IMR-90 (cell line): ENCODE measurements at regions of chr1 and their contacts with region 1.

Region 1: GRCh38 chr1:8463144-8463927 is 145.4 kb downstream of the SLC45A1 start:
- DNase-seq: peak; percentile 89
- ATAC-seq: peak; percentile 70
- H3K4me3 ChIP-seq: no peak overlapping the region
- H3K27ac ChIP-seq: peak overlapping the region; percentile 96
- H3K4me1 ChIP-seq: peaks cover 37% of the 10 kb centered on the region
- H3K27me3 ChIP-seq: no peaks in the 10 kb centered on the region
- CTCF ChIP-seq: no peak
- POLR2A ChIP-seq: no peak
- RAD21 ChIP-seq: no peak

Region 2: DNA sequence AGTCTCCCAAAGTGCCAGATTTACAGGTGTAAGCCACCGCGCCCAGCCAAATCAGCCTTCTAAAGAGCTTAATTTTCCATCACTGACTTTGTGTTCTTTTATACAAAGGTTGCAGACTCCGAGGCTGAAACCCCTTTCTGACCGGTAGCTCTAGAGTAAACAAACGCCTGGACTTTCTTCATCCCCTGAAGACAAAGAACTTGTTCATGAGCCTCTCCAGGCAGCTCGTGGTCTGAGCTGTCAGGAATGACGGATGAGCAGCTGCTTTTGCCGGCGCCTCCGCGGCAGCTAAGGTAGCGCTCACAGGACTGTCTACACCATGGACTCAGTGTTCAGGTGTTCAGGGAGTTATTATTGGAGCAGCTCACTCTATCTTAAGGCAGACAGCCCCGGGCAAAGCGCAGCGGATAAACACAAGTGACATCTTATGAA is 308.7 kb before region 1 on chr1:
- CTCF ChIA-PET with region 1: no interaction called
- POLR2A ChIA-PET with region 1: no interaction called
- dilution Hi-C with region 1: no loop called
- in situ Hi-C with region 1: no loop called
- intact Hi-C with region 1: no loop called
- DNase-seq: peak; percentile 74
- ATAC-seq: peak; percentile 71
- H3K4me3 ChIP-seq: no peak overlapping the region
- H3K27ac ChIP-seq: 0 out of 2 replicates have a peak overlapping the region, but pooled peaks have one; percentile 6
- H3K4me1 ChIP-seq: peaks cover 3% of the 10 kb centered on the region
- H3K27me3 ChIP-seq: no peaks in the 10 kb centered on the region
- CTCF ChIP-seq: no peak
- POLR2A ChIP-seq: no peak
- RAD21 ChIP-seq: no peak

Region 3: DNA sequence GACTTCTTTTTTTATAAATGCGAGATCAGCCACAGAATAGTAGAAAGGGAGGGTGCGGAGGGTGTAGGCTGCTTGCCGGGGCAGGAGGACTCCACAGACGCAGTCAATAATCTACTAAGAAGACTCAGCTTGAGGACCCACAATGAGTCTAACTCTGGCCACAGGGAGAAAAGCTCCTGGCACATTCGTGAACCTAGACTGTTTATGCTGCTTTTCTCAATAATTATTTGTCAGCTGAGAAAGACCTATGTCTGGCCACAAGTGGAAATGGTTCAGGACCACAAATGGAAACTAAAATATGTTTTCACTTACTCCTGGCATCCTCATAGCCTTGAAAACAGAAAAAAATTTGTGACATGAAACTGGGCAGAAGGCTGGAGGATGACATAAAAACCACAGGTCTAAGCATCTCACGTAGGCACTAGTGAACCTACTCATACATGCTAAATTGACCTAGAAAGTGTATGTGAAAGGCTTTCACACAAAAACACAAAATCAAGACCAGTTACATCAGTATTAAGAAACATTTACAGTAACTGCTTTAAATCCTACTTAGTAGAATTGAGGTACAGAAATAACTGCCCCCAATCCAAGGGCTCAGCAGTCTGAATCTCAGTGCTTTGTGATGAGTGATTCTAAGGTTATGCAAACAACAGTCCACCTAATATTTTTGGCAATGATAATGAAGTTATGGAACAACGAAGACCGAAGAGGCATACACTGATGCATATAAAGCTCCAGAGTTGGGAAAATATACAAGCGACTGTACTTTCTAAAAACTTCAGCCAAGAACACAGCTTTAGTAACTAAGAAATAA is 14.0 kb after region 1 on chr1:
- CTCF ChIA-PET with region 1: interaction called, 4 read pairs
- POLR2A ChIA-PET with region 1: interaction called, 14 read pairs
- dilution Hi-C with region 1: no loop called
- in situ Hi-C with region 1: no loop called
- intact Hi-C with region 1: no loop called
- DNase-seq: peak; percentile 76
- ATAC-seq: peak; percentile 64
- H3K4me3 ChIP-seq: no peak overlapping the region
- H3K27ac ChIP-seq: peak overlapping the region; percentile 86; the same call in 1 of the 2 replicates
- H3K4me1 ChIP-seq: peaks cover 17% of the 10 kb centered on the region
- H3K27me3 ChIP-seq: no peaks in the 10 kb centered on the region
- CTCF ChIP-seq: no peak
- POLR2A ChIP-seq: no peak
- RAD21 ChIP-seq: no peak

Region 4: DNA sequence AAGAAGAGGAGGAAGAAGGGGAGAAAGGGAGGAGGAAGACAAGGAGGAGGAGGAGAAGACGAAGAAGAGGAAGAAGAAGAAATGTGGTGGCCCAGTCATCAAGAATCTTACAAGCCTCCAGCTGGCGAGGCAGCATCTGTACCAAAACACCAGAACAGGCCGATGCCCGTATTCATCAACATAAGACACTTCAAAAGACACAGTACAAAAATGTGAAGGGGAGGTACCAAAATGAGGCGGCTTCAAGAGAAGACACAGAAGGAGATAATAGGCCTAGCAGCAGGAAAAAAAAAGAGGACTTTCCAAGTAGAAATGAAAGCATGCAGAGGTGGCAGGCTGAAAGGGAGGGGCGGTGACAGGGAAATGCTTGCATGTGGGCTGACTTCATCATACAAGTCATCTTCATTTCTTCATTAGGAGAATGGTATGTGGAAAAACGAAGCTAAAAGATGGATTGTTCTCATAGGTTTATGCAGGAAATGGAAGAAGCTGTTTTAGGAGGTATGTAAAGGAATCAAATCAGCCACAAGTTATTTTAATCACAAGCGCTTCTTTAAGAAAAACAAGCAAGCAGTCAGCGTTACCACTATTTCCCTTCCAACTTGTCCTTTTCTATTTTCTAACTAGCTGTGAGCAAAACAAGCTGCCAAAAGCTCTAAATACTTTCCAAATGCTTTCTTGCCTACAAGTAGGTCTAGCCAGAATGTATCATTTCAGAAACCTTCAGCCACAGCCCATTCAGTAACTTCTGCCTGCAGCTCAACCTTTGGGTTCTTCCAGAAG is 46.9 kb after region 1 on chr1:
- CTCF ChIA-PET with region 1: no interaction called
- POLR2A ChIA-PET with region 1: no interaction called
- dilution Hi-C with region 1: no loop called
- in situ Hi-C with region 1: no loop called
- intact Hi-C with region 1: loop called (anchors 1 kb)
- DNase-seq: peak; percentile 88
- ATAC-seq: peak; percentile 82
- H3K4me3 ChIP-seq: peak overlapping the region; percentile 25
- H3K27ac ChIP-seq: peak overlapping the region; percentile 86
- H3K4me1 ChIP-seq: peaks cover 18% of the 10 kb centered on the region
- H3K27me3 ChIP-seq: no peaks in the 10 kb centered on the region
- CTCF ChIP-seq: no peak
- POLR2A ChIP-seq: no peak
- RAD21 ChIP-seq: no peak

Region 5: GRCh38 chr1:8702850-8703810 is 239.8 kb after region 1 on chr1:
- CTCF ChIA-PET with region 1: no interaction called
- POLR2A ChIA-PET with region 1: interaction called, 3 read pairs
- dilution Hi-C with region 1: no loop called
- in situ Hi-C with region 1: no loop called
- intact Hi-C with region 1: loop called (anchors 2 kb)
- DNase-seq: peak; percentile 89
- ATAC-seq: peak; percentile 84
- H3K4me3 ChIP-seq: peak overlapping the region; percentile 93
- H3K27ac ChIP-seq: peak overlapping the region; percentile 94
- H3K4me1 ChIP-seq: peaks cover 10% of the 10 kb centered on the region
- H3K27me3 ChIP-seq: no peaks in the 10 kb centered on the region
- CTCF ChIP-seq: peak; percentile 35
- POLR2A ChIP-seq: peak; percentile 91
- RAD21 ChIP-seq: peak; percentile 39

Region 6: DNA sequence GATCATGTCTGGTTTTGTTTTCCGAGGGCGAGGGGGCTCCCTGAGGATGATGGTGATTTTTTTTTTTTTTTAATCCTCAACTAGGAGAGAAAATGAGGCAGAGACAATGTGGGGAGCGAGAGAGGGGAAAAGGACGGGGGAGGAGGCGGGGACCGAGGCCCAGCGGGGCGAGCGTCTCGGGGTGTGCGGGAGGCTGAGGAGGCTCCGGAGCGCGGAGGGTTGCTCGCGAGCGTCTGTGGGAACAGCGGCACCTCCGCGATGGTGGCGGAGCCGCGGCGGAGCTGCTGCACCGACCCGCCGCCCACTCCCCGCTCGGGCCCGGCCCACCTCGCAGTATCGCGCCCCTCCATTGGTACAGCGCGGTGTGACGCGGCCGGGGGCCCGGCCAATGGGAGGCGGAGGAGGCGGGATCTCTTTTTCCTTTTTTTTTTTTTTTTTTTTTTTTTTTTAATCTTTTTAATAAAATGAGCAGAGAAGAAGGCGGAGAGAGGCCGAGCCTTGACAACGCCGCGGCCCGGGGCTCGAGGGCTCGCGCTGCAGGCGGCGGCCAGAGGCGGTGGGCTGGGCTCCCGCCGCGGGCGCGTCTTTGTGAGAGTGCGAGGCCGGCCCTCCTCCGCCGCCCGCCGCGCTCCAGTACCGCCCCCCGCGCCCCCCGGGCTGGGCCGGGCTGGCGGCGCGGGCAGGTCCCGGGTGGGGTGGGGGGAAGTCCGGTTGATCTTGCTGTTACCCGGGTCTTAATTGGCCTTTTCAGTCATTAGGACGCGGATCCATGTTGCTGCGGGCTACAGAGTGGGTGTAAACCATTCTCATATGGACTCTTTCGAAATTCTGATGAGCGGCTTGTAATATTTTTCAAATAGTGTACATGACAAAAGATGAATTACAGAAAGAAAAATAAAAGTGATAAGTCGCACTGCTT is 354.3 kb after region 1 on chr1 and contains the start of gene RERE:
- CTCF ChIA-PET with region 1: no interaction called
- POLR2A ChIA-PET with region 1: no interaction called
- dilution Hi-C with region 1: no loop called
- in situ Hi-C with region 1: no loop called
- intact Hi-C with region 1: loop called (anchors 10 kb)
- DNase-seq: peak; percentile 91
- ATAC-seq: peak; percentile 91
- H3K4me3 ChIP-seq: peak within 1 kb of the TSS; percentile 82
- H3K27ac ChIP-seq: peak within 1 kb of the TSS; percentile 92
- H3K4me1 ChIP-seq: peaks cover 7% of the 10 kb centered on the region
- H3K27me3 ChIP-seq: no peaks in the 10 kb centered on the region
- CTCF ChIP-seq: peak; percentile 15; the same call in 1 of the 2 replicates
- POLR2A ChIP-seq: peak; percentile 93
- RAD21 ChIP-seq: no peak
- total RNA-seq, gene RERE: 11.5 and 15.8 TPM in 2 replicates

Region 7: GRCh38 chr1:9069326-9070100 is 606.2 kb after region 1 on chr1 and contains the start of gene SLC2A5:
- CTCF ChIA-PET with region 1: no interaction called
- POLR2A ChIA-PET with region 1: no interaction called
- dilution Hi-C with region 1: no loop called
- in situ Hi-C with region 1: no loop called
- intact Hi-C with region 1: no loop called
- DNase-seq: no peak
- ATAC-seq: 0 out of 2 replicates have a peak, but pooled peaks have one; percentile 6
- H3K4me3 ChIP-seq: no peak within 1 kb of the TSS
- H3K27ac ChIP-seq: peak within 1 kb of the TSS; percentile 27; the same call in 1 of the 2 replicates
- H3K4me1 ChIP-seq: peaks cover 12% of the 10 kb centered on the region
- H3K27me3 ChIP-seq: peaks cover 6% of the 10 kb centered on the region
- CTCF ChIP-seq: no peak
- POLR2A ChIP-seq: no peak
- RAD21 ChIP-seq: no peak
- total RNA-seq, gene SLC2A5: 0.18 TPM in 1 of 2 replicates, not detected in the other